WTC11 (cell line): ENCODE measurements at regions of chr13 and their contacts with region 1.

Region 1: GRCh38 chr13:113742000-113742441 is 17.0 kb upstream of the TMEM255B start:
- DNase-seq: peak; percentile 53
- ATAC-seq: peak; percentile 87
- H3K4me3 Mint-ChIP-seq: no peak overlapping the region
- H3K27ac Mint-ChIP-seq: no peak overlapping the region
- H3K4me1 Mint-ChIP-seq: peaks cover 8% of the 10 kb centered on the region; the same call in 1 of the 2 replicates
- H3K27me3 Mint-ChIP-seq: no peaks in the 10 kb centered on the region
- CTCF ChIP-seq: peak; percentile 30; the same call in 1 of the 2 replicates

Region 2: GRCh38 chr13:113493315-113493951 is 248.6 kb before region 1 on chr13:
- CTCF ChIA-PET with region 1: no interaction called
- POLR2A ChIA-PET with region 1: no interaction called
- DNase-seq: no peak
- ATAC-seq: no peak
- H3K4me3 Mint-ChIP-seq: peak overlapping the region; percentile 45
- H3K27ac Mint-ChIP-seq: peak overlapping the region; percentile 71
- H3K4me1 Mint-ChIP-seq: peaks cover 59% of the 10 kb centered on the region
- H3K27me3 Mint-ChIP-seq: no peaks in the 10 kb centered on the region
- CTCF ChIP-seq: no peak

Region 3: GRCh38 chr13:113724780-113725315 is 17.2 kb before region 1 on chr13:
- CTCF ChIA-PET with region 1: interaction called, 12 read pairs
- POLR2A ChIA-PET with region 1: no interaction called
- DNase-seq: peak; percentile 76
- ATAC-seq: peak; percentile 96
- H3K4me3 Mint-ChIP-seq: peak overlapping the region; percentile 55
- H3K27ac Mint-ChIP-seq: no peak overlapping the region
- H3K4me1 Mint-ChIP-seq: no peaks in the 10 kb centered on the region; the same call in 1 of the 2 replicates
- H3K27me3 Mint-ChIP-seq: peaks cover 16% of the 10 kb centered on the region
- CTCF ChIP-seq: peak; percentile 75

Region 4: DNA sequence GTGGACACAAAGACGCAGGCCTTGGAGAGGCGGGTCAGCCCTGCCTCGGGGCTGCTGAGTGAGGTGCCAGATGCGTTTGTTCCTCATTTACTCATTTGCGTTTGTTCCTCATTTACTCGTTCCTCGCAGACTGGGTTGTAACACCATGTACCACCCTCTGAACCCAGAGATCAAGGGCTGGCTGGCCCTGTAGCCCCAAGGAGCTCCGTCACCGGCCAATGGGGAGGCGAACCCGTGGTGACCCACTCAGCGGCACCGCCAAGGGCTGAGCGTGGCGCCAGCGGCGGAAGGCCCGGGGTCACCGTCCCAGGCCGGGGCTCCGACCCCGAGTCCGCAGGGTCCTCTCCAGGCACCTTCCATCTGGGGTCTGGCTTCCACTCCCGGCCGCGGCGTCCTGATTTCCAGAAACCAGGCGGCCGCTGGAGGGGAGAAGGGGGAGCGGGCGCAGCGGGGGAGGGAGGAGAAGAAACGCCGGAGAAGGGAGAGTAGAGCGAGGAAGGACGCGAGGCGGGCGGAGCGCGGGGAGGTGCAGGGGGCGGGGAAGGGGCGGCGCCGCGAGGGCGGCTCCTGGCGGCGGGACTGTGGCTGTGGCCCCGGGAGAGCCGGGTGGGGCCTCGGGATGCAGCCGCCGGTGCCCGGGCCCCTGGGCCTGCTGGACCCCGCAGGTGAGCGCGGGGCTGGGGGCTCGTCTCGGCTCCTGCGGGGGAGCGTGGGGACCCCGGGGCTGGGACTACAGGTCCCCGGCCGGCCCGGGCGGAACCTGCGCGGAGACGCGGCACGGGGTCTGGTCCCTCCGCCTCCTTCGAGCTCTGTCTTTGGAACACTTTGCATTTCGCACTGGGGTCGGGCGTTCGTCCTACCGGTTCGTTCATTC is 16.9 kb after region 1 on chr13 and contains the start of gene TMEM255B:
- CTCF ChIA-PET with region 1: interaction called, 13 read pairs
- POLR2A ChIA-PET with region 1: no interaction called
- DNase-seq: peak; percentile 86
- ATAC-seq: peak; percentile 89
- H3K4me3 Mint-ChIP-seq: peak within 1 kb of the TSS; percentile 90
- H3K27ac Mint-ChIP-seq: no peak within 1 kb of the TSS
- H3K4me1 Mint-ChIP-seq: peaks cover 16% of the 10 kb centered on the region
- H3K27me3 Mint-ChIP-seq: peaks cover 43% of the 10 kb centered on the region
- CTCF ChIP-seq: no peak
- total RNA-seq, gene TMEM255B: 4.7 to 5.9 TPM (median 4.8 TPM) in 3 replicates

Region 5: GRCh38 chr13:113802145-113802531 is 60.1 kb after region 1 on chr13:
- CTCF ChIA-PET with region 1: interaction called, 23 read pairs
- POLR2A ChIA-PET with region 1: no interaction called
- DNase-seq: peak; percentile 76
- ATAC-seq: peak; percentile 83
- H3K4me3 Mint-ChIP-seq: 0 out of 2 replicates have a peak overlapping the region, but pooled peaks have one; percentile 14
- H3K27ac Mint-ChIP-seq: no peak overlapping the region
- H3K4me1 Mint-ChIP-seq: no peaks in the 10 kb centered on the region
- H3K27me3 Mint-ChIP-seq: no peaks in the 10 kb centered on the region
- CTCF ChIP-seq: no peak

Region 6: DNA sequence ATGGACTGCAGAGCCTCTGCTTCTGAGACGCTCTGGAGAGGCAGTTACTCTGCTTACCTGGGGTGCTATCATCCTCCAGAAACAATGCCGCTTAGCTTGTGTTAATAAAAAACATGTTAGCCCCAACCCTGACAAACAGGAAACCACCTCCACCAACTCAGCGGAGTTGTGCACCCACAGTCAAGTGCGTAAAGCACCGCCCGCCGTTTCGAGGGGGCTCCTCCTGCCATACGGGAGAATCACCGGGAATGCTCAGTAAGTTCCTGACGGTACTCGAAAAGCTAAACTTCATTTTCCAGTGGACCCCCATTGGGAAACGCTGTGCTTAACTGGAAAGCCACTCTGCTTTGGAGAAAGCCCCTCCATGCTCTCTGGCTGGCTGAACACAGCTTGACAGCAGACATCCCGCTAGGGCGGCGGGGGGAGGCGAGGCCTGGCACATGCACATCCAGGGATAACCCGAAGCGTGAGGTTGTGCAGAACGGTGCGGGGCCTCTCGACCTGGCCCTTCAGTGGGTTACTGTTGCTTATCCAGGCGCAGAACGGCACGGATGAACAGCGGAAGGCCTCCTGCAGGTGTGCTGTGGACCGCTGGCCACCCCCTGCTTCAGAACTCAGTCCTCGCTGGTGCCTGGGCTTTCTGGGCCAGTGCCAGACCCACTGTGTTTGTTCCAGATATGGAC is 104.8 kb after region 1 on chr13:
- CTCF ChIA-PET with region 1: no interaction called
- POLR2A ChIA-PET with region 1: no interaction called
- DNase-seq: peak; percentile 8
- ATAC-seq: no peak
- H3K4me3 Mint-ChIP-seq: no peak overlapping the region
- H3K27ac Mint-ChIP-seq: no peak overlapping the region
- H3K4me1 Mint-ChIP-seq: peaks cover 2% of the 10 kb centered on the region; the same call in 1 of the 2 replicates
- H3K27me3 Mint-ChIP-seq: no peaks in the 10 kb centered on the region
- CTCF ChIP-seq: no peak

Region 7: DNA sequence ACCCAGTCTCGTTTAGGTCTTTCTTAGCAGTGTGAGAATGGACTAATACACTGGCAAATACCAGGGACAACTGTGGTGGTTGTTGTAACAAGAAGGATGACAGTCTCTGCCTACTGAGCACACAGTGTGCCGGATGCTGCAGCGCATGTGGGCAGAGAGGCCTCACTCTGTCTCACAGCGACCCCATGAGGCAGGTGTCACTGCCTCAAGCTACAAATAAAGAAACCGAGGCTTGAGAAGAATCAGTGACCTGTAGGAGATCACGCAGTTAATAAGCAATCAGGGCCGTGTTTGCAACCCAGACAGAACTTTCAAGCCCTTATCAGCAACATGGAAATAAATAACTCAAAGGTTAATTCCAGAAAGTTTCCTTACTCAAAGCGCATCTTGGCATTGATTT is 162.4 kb after region 1 on chr13:
- CTCF ChIA-PET with region 1: interaction called, 12 read pairs
- POLR2A ChIA-PET with region 1: no interaction called
- DNase-seq: peak; percentile 66
- ATAC-seq: peak; percentile 93
- H3K4me3 Mint-ChIP-seq: no peak overlapping the region
- H3K27ac Mint-ChIP-seq: no peak overlapping the region
- H3K4me1 Mint-ChIP-seq: peaks cover 15% of the 10 kb centered on the region
- H3K27me3 Mint-ChIP-seq: no peaks in the 10 kb centered on the region
- CTCF ChIP-seq: 0 out of 2 replicates have a peak, but pooled peaks have one; percentile 33

Region 8: GRCh38 chr13:113941571-113942191 is 199.7 kb after region 1 on chr13:
- CTCF ChIA-PET with region 1: no interaction called
- POLR2A ChIA-PET with region 1: no interaction called
- DNase-seq: no peak
- ATAC-seq: no peak
- H3K4me3 Mint-ChIP-seq: no peak overlapping the region
- H3K27ac Mint-ChIP-seq: no peak overlapping the region
- H3K4me1 Mint-ChIP-seq: no peaks in the 10 kb centered on the region
- H3K27me3 Mint-ChIP-seq: no peaks in the 10 kb centered on the region
- CTCF ChIP-seq: no peak